MCF 10A (cell line): ENCODE measurements at regions of chr2 and their contacts with region 1.

Region 1: GRCh38 chr2:76455910-76456309 is 745.2 kb upstream of the GCFC2 start:
- DNase-seq: no peak
- H3K4me3 Mint-ChIP-seq: no peak overlapping the region
- H3K27ac Mint-ChIP-seq: no peak overlapping the region
- H3K4me1 Mint-ChIP-seq: no peaks in the 10 kb centered on the region
- H3K27me3 Mint-ChIP-seq: peaks cover 50% of the 10 kb centered on the region
- CTCF ChIP-seq: no peak

Region 2: DNA sequence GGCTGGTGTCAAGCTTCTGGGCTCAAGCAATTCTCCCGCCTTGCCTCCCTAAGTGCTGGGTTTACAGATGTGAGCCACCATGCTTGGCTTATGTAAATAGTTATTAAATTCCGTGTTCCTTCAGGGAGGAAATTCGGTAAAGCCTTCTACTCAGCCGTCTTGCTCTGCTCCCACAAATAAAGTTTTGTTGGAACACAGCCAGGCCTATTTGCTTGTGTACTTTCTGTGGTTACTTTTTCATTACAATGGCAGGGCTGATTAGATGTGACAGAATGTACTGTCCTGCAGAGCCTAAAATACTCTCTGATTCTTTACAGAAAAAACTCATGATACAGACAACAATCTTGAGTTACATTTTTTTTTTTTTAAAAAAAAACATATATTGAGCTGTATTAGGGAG is 1187.8 kb before region 1 on chr2:
- CTCF ChIA-PET with region 1: no interaction called
- POLR2A ChIA-PET with region 1: no interaction called
- intact Hi-C with region 1: no loop called
- DNase-seq: no peak
- H3K4me3 Mint-ChIP-seq: no peak overlapping the region
- H3K27ac Mint-ChIP-seq: no peak overlapping the region
- H3K4me1 Mint-ChIP-seq: no peaks in the 10 kb centered on the region
- H3K27me3 Mint-ChIP-seq: peaks cover 32% of the 10 kb centered on the region
- CTCF ChIP-seq: no peak

Region 3: DNA sequence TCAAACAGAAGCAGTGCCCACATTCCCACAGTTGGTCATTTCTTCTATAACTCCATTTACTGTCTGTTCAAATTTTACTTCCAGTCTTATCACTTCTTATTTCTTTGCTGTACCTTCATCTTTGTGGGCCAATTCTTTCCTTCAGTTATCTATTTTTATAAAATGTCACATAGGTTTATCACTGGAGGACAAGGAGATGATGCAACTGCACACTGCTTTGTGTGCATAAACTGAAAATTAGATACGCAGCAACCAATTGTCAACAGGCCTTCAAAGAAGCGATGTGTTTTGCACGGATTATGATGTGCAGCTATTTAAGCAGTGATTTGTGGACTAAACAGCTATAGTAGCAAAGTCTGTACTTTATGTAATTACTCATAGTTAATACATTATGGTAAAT is 18.3 kb before region 1 on chr2:
- CTCF ChIA-PET with region 1: interaction called, 3 read pairs
- POLR2A ChIA-PET with region 1: no interaction called
- intact Hi-C with region 1: loop called (anchors 1 kb)
- DNase-seq: no peak
- H3K4me3 Mint-ChIP-seq: no peak overlapping the region
- H3K27ac Mint-ChIP-seq: no peak overlapping the region
- H3K4me1 Mint-ChIP-seq: no peaks in the 10 kb centered on the region
- H3K27me3 Mint-ChIP-seq: no peaks in the 10 kb centered on the region
- CTCF ChIP-seq: no peak

Region 4: GRCh38 chr2:76491503-76491902 is 35.6 kb after region 1 on chr2:
- CTCF ChIA-PET with region 1: no interaction called
- POLR2A ChIA-PET with region 1: no interaction called
- intact Hi-C with region 1: no loop called
- DNase-seq: peak; percentile 34
- H3K4me3 Mint-ChIP-seq: no peak overlapping the region
- H3K27ac Mint-ChIP-seq: no peak overlapping the region
- H3K4me1 Mint-ChIP-seq: peaks cover 5% of the 10 kb centered on the region
- H3K27me3 Mint-ChIP-seq: peaks cover 33% of the 10 kb centered on the region
- CTCF ChIP-seq: no peak